ENCODE measurements at regions of chr1 and their contacts with region 1.

Region 1: DNA sequence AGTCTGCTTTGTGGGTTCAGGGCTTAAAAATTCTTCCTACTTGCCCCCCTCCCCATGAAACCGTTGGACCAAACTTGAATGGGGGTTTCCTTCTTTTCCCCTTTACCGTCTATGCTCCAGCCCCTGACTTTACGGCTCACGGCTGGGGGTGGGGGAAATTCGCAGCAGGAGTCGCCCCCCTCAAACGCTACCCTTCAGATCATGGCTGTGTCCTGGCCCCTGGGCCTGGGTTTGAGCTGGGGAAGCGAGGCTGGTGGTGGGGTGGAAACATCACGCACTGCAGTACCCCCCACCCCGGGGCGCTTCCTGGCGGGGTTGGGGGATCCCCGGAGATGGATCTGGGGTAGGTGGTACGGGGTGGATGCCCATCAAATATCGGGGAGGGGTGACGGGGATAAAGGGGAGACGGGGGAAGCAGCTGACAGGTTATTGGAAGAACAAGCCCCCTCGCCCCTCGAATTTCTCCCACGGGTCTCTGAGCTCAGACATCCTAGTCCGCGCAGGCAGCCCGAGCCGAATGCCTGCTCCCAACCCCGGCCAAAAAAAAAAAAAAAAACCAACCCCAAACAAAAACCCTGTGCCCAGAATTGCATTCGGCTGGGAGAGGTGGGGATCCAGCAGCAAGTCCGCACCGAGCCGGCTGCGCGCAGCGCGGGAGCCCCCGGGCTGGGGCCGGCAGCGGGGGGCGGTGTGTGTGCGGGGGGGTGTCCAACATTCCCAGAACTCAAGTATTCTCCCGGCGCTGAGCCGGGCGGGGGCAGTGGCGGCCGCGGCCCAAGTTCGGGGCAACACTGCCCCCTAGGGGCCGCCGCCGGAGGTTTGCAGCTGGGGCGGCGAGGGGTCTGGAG is 59.0 kb upstream of the ACOT11 start:
- DNase-seq: peak; percentile 63 to 83 (median 77)
- H3K4me3 ChIP-seq: peak overlapping the region; percentile 58 to 78 (median 68)
- H3K27ac ChIP-seq: peak overlapping the region; percentile 81 to 91 (median 90)
- H3K4me1 ChIP-seq: peaks cover 14 to 26% of the 10 kb centered on the region in 2 donors
- H3K27me3 ChIP-seq: no peaks in the 10 kb centered on the region
- CTCF ChIP-seq: peak; percentile 82 to 96 (median 94)
- POLR2A ChIP-seq: peak in 1 of 2 donors; percentile 20

Region 2: DNA sequence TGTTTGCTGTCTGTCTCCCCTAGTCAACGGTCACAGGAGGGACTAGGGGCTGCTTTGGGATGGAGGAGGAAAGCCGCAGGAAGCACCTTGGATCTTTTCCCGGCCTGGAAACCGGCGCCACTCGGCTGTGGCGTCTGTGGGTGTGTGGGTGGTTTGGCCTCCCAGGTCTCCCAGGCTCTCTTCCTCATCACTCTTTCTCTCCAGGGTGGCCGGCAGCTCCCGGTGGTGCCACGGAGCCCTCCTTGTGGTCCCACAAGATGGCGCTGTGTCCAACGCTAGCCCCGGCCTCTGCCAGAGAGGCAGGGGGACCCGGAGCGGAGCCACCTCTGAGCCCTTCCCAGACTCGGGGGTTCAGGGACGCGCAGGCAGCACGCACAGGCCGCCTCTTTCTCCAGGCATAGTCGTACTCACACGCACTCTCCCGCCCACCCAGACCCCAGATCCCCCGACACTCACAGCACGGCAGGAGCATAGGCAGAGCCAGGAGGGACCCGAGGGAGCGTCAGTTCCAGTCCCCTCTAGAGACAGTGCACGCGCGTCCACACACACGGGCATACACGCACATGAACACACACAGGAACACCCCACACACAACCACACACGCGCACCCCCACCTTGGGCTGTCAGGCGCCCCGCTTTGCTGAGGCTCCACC is 367.4 kb before region 1 on chr1:
- intact Hi-C with region 1: loop called (anchors 5 kb)
- DNase-seq: peak; percentile 68 to 90 (median 82)
- H3K4me3 ChIP-seq: peak overlapping the region in 1 of 4 donors; percentile 5
- H3K27ac ChIP-seq: no peak overlapping the region
- H3K4me1 ChIP-seq: peaks cover 0 to 10% of the 10 kb centered on the region in 2 donors
- H3K27me3 ChIP-seq: no peaks in the 10 kb centered on the region
- CTCF ChIP-seq: peak; percentile 57 to 79 (median 68)
- POLR2A ChIP-seq: no peak

Region 3: GRCh38 chr1:54220004-54220811 is 268.8 kb before region 1 on chr1:
- intact Hi-C with region 1: loop called in 1 of 2 experiments (anchors 5 kb)
- DNase-seq: peak; percentile 90 to 98 (median 96)
- H3K4me3 ChIP-seq: no peak overlapping the region
- H3K27ac ChIP-seq: peak overlapping the region; percentile 72 to 91 (median 90)
- H3K4me1 ChIP-seq: peaks cover 29 to 55% of the 10 kb centered on the region in 2 donors
- H3K27me3 ChIP-seq: no peaks in the 10 kb centered on the region
- CTCF ChIP-seq: no peak
- POLR2A ChIP-seq: peak in 1 of 2 donors; percentile 50

Region 4: GRCh38 chr1:54273092-54273794 is 215.8 kb before region 1 on chr1:
- intact Hi-C with region 1: loop called in 1 of 2 experiments (anchors 5 kb)
- DNase-seq: peak; percentile 89 to 98 (median 95)
- H3K4me3 ChIP-seq: no peak overlapping the region
- H3K27ac ChIP-seq: peak overlapping the region; percentile 90 to 99 (median 96)
- H3K4me1 ChIP-seq: peaks cover 53 to 70% of the 10 kb centered on the region in 2 donors
- H3K27me3 ChIP-seq: no peaks in the 10 kb centered on the region
- CTCF ChIP-seq: peak in 4 of 6 experiments; percentile 4 to 75 (median 70)
- POLR2A ChIP-seq: peak in 1 of 2 donors; percentile 56

Region 5: DNA sequence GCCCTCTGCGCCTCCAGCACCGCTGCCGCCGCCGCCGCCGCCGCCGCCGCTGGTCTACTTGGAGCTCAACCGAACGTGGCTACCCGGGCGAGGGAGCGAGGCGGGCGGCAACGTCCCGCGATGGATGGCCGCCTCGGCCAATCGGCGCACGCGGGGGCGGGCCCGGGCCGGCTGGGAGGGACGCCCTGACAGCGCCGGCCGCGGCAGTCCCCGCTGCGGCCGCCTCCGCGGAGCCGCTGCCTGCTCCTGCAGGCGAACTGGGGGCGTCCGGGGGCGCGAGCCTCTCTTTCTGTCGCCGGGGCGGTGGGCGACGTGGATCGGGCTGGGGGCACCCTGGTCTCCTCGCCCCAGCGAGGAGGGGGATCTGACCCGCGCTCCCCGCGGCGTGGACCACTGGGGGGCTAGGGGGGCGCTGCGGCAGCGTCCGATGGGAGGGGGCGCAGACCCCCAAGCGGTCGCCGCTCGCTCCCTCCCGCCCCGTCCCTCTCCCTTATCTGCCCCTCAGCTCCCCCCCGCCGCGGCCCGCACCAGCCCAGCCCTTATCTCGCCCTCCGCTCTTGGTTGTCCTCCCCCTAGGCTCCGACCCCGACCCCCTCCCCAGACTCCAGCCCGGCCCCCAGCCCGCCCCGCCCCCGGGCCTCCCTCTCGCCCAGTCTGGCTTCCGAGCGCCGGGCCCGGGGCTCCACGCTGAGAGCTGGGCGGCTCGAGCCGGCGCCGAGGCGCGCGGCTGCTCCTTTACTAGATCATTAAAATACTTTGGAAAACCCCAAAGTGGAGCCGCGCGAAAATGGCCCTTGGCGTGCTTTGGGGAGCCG is 82.5 kb before region 1 on chr1 and contains the start of gene SSBP3:
- intact Hi-C with region 1: loop called (anchors 2 kb)
- DNase-seq: peak; percentile 90 to 94 (median 92)
- H3K4me3 ChIP-seq: peak within 1 kb of the TSS in 3 of 4 donors; percentile 40 to 91 (median 83)
- H3K27ac ChIP-seq: peak within 1 kb of the TSS; percentile 83 to 96 (median 92)
- H3K4me1 ChIP-seq: peaks cover 17 to 43% of the 10 kb centered on the region in 2 donors
- H3K27me3 ChIP-seq: no peaks in the 10 kb centered on the region
- CTCF ChIP-seq: peak in 2 of 6 experiments; percentile 30 to 41
- POLR2A ChIP-seq: peak; percentile 86 to 97
- total RNA-seq, gene SSBP3: 15.3 to 91.5 (median 49.7) TPM